Activated naive CD4-positive, alpha-beta T cell treated with anti-CD3 and anti-CD28 coated beads for 36 hours (primary cell): ENCODE measurements at regions of chr5 and their contacts with region 1.

Region 1: DNA sequence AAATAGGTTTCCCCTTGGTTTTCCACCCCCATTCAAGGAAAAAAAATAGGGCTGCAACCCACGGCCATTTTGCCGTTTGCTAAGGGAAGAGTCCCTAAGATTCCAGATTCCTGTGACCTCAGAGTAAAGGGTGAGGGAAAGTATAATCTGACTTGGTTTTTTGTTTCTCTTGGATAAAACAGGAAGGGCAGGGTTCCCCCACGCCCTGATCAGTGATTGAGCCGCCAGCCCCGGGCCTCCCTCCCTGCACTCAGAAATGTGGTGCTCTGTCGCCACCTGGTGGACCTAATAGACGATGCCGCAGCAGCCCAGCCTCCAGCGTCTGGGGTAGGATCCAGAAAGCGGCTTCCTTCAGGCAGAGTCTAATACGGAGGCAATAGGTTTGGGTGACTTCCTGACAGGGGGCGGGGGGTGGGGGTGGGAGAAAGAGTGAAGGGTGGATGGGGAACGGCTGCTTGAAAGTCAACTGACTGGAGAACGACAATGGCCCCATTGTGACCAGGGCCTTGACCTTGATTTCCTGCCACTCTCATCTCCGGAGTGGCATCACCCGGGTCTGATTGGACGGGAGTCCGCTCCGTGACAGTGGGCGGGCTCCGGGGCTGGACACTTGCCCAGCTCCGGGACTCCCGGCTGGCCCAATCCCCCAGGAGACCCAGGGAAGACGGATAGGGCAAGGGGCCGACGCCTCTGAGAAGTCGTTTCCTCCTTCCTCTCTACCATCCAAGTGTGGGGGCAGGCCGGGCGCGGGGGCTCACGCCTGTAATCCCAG is 17.8 kb upstream of the CYSTM1 start:
- DNase-seq: peak; percentile 94
- H3K4me3 Mint-ChIP-seq: peak overlapping the region; percentile 42
- H3K27ac Mint-ChIP-seq: no peak overlapping the region
- H3K4me1 Mint-ChIP-seq: peaks cover 4% of the 10 kb centered on the region
- H3K27me3 Mint-ChIP-seq: no peaks in the 10 kb centered on the region

Region 2: DNA sequence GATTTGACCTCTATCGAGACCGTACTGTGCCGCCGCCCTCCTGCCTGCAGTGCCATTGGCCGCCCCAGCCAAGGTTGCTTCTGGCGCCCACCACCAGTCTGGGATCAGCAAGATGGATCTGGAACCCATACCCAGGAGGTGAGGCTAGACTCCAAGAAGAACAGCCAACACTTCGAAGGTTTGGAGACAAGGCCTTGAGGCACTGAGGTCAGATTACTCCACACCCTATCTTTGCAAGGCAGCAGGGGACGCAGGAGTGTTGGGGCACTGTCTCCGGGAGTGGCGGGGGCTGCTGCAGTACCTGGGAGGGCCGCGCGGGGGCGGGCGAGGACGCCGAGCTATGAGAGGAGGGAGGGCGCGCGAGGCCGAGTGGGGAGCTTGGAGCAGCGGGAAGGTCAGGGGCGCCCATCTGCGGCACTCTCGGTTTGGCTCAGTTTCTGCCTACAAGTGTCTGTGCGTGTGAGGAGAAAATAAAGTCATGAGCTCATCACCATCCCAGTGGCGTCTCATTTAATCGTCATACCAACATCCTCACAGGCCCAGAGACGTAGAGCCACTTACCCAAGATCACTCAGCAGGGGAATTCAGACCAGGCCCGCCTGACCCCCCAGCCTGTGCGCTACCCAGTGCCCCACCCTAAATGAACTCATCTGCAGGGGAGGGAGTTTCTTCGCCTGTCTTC is 382.1 kb before region 1 on chr5:
- CTCF ChIA-PET with region 1: no interaction called
- intact Hi-C with region 1: loop called (anchors 1 kb)
- DNase-seq: peak; percentile 84
- H3K4me3 Mint-ChIP-seq: peak overlapping the region; percentile 14
- H3K27ac Mint-ChIP-seq: no peak overlapping the region
- H3K4me1 Mint-ChIP-seq: peaks cover 8% of the 10 kb centered on the region
- H3K27me3 Mint-ChIP-seq: no peaks in the 10 kb centered on the region

Region 3: DNA sequence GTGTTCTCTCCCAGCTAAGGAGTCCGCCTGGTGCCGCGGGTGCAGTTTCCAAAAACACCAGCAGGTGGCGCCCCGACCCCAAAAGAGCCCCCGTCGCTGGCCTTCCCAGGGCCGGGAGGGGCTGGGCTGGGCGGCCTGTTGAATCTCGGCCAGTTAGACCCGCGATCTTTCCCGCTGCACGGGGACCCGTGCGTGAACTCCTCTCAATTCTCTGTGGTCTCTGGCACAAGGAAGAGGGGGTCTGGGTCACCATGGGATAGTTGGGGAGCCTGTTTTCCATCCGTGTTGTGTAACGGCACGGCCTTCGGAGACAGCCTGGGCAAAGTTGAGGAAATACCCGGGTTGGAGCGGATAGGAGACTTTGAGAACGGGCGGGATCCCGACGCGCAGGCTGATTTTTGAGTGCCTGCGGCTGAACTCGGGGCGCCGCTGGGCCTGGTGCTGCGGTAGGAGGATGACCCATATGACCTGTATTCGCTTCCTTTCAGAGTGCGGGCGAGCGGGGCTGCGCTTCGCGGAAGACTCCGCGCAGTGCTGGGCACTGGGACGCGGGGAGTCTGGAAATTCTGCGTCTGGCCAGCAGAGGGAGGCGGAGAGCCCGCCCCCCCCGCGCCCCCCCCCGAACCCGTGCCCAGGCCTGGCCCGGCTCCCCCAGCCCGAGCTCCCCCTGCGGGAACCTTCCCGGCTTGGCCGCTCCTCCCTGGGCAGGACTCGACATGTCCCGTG is 369.5 kb before region 1 on chr5:
- CTCF ChIA-PET with region 1: interaction called, 3 read pairs
- intact Hi-C with region 1: loop called (anchors 1 kb)
- DNase-seq: peak; percentile 86
- H3K4me3 Mint-ChIP-seq: peak overlapping the region; percentile 75
- H3K27ac Mint-ChIP-seq: no peak overlapping the region
- H3K4me1 Mint-ChIP-seq: peaks cover 6% of the 10 kb centered on the region
- H3K27me3 Mint-ChIP-seq: peaks cover 14% of the 10 kb centered on the region

Region 4: DNA sequence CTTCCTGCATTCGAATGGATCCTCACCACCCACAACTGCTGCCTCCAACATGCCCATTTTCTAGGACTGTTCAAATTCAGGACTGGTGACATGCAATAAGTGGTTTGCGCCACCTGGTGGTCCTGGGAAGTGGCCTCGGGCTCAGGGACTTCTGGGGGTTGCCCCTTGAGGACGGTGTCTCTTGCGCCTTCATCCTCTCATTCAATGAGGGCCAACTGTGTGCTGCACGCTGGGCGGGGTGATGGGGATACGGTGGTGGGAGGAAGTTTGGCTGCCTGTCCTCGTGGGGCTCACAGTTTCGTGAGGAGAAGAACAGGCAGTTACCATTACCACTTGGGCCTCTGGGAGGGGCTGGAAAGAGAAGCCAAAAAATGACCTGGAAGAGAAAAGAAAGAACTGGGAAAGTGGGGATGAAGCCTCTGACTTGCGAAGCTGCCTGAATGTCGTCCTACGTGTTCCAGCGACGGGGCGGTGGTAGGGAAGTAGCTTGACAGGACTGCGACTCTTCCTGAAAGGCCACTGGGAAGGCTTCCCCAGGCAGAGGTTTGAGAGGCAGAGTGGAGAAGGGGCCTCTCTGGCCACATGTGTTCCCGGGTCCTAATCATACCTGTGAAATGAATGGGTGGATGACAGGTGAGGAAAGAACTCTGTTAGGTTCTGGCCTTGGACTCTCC is 312.6 kb before region 1 on chr5:
- CTCF ChIA-PET with region 1: no interaction called
- intact Hi-C with region 1: loop called (anchors 10 kb)
- DNase-seq: peak; percentile 90
- H3K4me3 Mint-ChIP-seq: no peak overlapping the region
- H3K27ac Mint-ChIP-seq: no peak overlapping the region
- H3K4me1 Mint-ChIP-seq: peaks cover 5% of the 10 kb centered on the region
- H3K27me3 Mint-ChIP-seq: peaks cover 16% of the 10 kb centered on the region

Region 5: GRCh38 chr5:140042643-140043500 is 114.3 kb before region 1 on chr5 and contains the start of gene NRG2:
- CTCF ChIA-PET with region 1: interaction called, 3 read pairs
- intact Hi-C with region 1: loop called (anchors 1 kb)
- DNase-seq: peak; percentile 58
- H3K4me3 Mint-ChIP-seq: peak within 1 kb of the TSS; percentile 70
- H3K27ac Mint-ChIP-seq: no peak within 1 kb of the TSS
- H3K4me1 Mint-ChIP-seq: peaks cover 11% of the 10 kb centered on the region
- H3K27me3 Mint-ChIP-seq: peaks cover 47% of the 10 kb centered on the region
- total RNA-seq, gene NRG2: not detected

Region 6: GRCh38 chr5:140107312-140108083 is 49.7 kb before region 1 on chr5:
- CTCF ChIA-PET with region 1: interaction called, 3 read pairs
- intact Hi-C with region 1: loop called (anchors 1 kb)
- DNase-seq: peak; percentile 91
- H3K4me3 Mint-ChIP-seq: peak overlapping the region; percentile 98
- H3K27ac Mint-ChIP-seq: peak overlapping the region; percentile 91
- H3K4me1 Mint-ChIP-seq: peaks cover 39% of the 10 kb centered on the region
- H3K27me3 Mint-ChIP-seq: no peaks in the 10 kb centered on the region

Region 7: GRCh38 chr5:140145818-140146522 is 11.2 kb before region 1 on chr5:
- CTCF ChIA-PET with region 1: interaction called, 79 read pairs
- intact Hi-C with region 1: loop called (anchors 1 kb)
- DNase-seq: peak; percentile 64
- H3K4me3 Mint-ChIP-seq: peak overlapping the region; percentile 52
- H3K27ac Mint-ChIP-seq: no peak overlapping the region
- H3K4me1 Mint-ChIP-seq: peaks cover 15% of the 10 kb centered on the region
- H3K27me3 Mint-ChIP-seq: peaks cover 20% of the 10 kb centered on the region